ENCODE measurements at regions of chr2 and their contacts with region 1.

Region 1: GRCh38 chr2:102166189-102166845 is 20.5 kb upstream of the IL1RL2 start:
- DNase-seq: no peak
- CTCF ChIP-seq: no peak

Region 2: DNA sequence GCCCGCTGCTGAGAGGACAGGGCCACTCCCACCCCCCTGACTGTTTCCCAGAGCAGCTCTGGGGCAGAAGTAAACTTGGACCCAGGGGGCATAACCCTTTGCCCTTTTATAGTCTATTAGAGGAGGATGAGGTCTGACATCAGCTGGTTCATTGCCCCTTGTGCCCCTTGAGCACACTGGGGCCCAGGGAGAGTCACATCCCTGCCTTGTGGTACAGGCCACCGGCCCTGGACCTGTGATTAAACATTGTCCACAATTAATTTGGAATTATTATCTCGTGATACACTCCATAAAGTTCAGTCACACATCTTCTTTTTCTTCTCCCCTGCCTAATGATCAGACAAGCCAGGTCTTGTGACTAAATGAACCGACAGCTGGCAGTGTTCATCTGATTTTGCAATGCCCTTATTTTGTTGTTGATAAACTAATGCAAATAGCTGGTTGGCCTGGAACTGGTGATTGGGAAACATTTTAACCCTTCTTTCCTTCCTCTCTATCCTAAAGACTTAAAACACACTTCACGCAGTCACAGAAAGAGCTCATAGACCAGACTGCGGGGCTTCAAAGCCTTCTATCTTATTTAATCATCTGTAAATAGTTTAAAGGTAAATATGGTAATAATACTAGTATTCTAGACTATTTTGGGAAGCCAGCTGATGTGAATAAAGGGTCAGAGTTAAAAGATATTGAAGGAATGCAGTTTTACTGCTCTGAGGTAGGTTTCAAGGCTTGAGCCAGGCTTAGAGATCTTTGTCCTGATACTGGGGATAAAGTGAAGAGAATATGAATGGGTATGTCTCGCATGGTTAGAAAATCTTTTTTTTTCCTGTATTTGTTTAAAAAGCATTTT is 10.4 kb before region 1 on chr2:
- CTCF ChIA-PET with region 1: interaction called, 12 read pairs
- POLR2A ChIA-PET with region 1: no interaction called
- DNase-seq: no peak
- CTCF ChIP-seq: no peak